ENCODE measurements at regions of chr6 and their contacts with region 1.

Region 1: GRCh38 chr6:44096612-44097011 is 30.6 kb downstream of the MRPL14 start:
- DNase-seq: peak; percentile 58 to 76
- ATAC-seq: peak; percentile 85 to 90
- H3K4me3 ChIP-seq: no peak overlapping the region
- H3K27ac ChIP-seq: no peak overlapping the region
- H3K4me1 ChIP-seq: no peaks in the 10 kb centered on the region
- CTCF ChIP-seq: peak; percentile 62
- EP300 ChIP-seq: no peak
- POLR2A ChIP-seq: no peak
- RAD21 ChIP-seq: peak; percentile 77 to 87

Region 2: GRCh38 chr6:44113414-44113813 is 16.8 kb after region 1 on chr6:
- CTCF ChIA-PET with region 1: interaction called, 30 read pairs
- POLR2A ChIA-PET with region 1: no interaction called
- DNase-seq: peak in 1 of 2 experiments; percentile 18
- ATAC-seq: peak; percentile 50 to 69; a peak in 3 of 6 replicates
- H3K4me3 ChIP-seq: no peak overlapping the region
- H3K27ac ChIP-seq: no peak overlapping the region
- H3K4me1 ChIP-seq: peaks cover 19% of the 10 kb centered on the region
- CTCF ChIP-seq: no peak; the same call in 2 of the 3 replicates
- EP300 ChIP-seq: no peak
- POLR2A ChIP-seq: no peak
- RAD21 ChIP-seq: no peak

Region 3: DNA sequence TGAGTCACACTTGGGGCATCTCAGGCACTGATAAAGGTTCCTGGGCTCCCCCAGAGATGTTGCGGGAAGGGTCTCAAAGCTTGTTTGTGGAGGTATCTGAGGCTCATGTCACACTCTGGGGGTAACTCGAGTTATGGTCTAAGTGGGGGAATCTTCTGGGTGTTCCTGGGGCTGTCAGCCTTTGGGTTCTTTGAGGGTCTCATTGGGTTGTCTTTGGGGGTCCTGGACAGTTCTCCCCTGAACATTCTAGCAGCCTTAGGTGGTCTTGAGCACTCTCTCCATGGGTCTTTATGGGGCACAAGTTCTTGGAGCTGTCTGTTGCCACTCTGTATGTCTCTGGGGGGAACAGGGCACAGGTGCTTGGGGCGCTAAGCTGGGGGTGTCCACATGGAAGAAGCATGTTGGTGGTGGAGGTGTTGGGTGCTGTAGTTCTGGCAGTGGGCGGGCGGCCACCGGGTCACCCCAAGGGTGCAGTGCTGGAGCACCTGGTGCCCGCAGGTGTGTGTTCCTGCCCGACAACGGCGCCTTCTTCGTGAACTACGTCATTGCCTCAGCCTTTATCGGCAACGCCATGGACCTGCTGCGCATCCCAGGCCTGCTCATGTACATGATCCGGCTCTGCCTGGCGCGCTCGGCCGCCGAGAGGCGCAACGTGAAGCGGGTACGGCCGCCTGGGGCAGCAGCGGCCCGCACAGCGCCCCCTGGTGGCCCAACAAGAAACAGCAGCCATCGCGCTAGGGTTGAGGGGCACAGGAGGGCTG is 54.9 kb after region 1 on chr6:
- CTCF ChIA-PET with region 1: interaction called, 19 read pairs
- POLR2A ChIA-PET with region 1: no interaction called
- DNase-seq: peak; percentile 61 to 71
- ATAC-seq: peak; percentile 77 to 93
- H3K4me3 ChIP-seq: no peak overlapping the region
- H3K27ac ChIP-seq: no peak overlapping the region
- H3K4me1 ChIP-seq: no peaks in the 10 kb centered on the region
- CTCF ChIP-seq: peak; percentile 89
- EP300 ChIP-seq: no peak
- POLR2A ChIP-seq: no peak
- RAD21 ChIP-seq: peak; percentile 55 to 62

Region 4: DNA sequence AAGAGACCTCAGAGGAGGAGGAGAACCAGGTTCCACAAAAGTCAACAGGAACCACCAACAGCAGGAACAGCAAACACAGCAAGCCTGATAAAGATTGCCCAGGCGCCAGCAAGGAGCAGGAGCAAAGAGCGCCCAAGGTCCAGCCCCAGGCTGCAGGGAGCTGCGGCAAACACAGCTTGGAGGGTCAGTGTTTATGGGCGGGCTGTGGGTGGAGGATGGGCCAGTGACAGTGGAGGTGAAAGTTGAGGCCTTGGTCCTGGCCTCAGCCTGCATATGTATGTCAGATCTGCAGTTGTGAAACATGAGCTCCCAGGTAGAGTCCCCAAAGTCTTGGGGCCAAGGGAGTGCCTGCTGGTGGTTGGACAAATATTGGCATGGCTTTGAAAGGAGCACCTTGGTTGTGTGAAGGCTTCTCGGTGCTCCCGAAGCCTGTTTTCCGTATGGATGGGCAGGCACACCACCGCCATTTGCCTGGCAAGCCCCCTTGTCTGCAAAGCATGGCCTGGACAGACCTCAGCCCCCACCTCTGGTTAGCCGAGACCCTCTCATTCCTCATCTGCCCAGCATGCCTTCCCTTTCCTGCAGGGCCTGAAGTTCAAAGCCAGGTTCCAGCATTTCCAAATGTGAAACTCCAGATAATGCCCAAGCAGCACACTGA is 60.0 kb after region 1 on chr6:
- CTCF ChIA-PET with region 1: interaction called, 19 read pairs
- POLR2A ChIA-PET with region 1: no interaction called
- DNase-seq: no peak
- ATAC-seq: no peak
- H3K4me3 ChIP-seq: no peak overlapping the region
- H3K27ac ChIP-seq: no peak overlapping the region
- H3K4me1 ChIP-seq: no peaks in the 10 kb centered on the region
- CTCF ChIP-seq: no peak
- EP300 ChIP-seq: no peak
- POLR2A ChIP-seq: no peak
- RAD21 ChIP-seq: no peak

Measured in A549 (cell line).